SK-N-SH (cell line): ENCODE measurements at regions of chr16 and their contacts with region 1.

Region 1: GRCh38 chr16:48365581-48366164 is 19.5 kb downstream of the SIAH1 start:
- DNase-seq: peak; percentile 90
- H3K4me3 ChIP-seq: peak overlapping the region; percentile 63 to 86
- H3K27ac ChIP-seq: peak overlapping the region; percentile 82 to 91
- H3K4me1 ChIP-seq: peaks cover 14 to 27% of the 10 kb centered on the region in 2 experiments; a peak in 3 of 4 replicates
- H3K27me3 ChIP-seq: no peaks in the 10 kb centered on the region
- CTCF ChIP-seq: no peak
- EP300 ChIP-seq: no peak
- RAD21 ChIP-seq: no peak; the same call in 1 of the 2 replicates

Region 2: GRCh38 chr16:48353565-48354163 is 12.0 kb before region 1 on chr16:
- CTCF ChIA-PET with region 1: interaction called, 11 read pairs
- POLR2A ChIA-PET with region 1: interaction called, 3 read pairs
- DNase-seq: peak; percentile 76
- H3K4me3 ChIP-seq: peak overlapping the region in 1 of 2 experiments; percentile 39; a peak in 1 of 4 replicates
- H3K27ac ChIP-seq: peak overlapping the region in 1 of 2 experiments; percentile 19; a peak in 1 of 4 replicates
- H3K4me1 ChIP-seq: no peaks in the 10 kb centered on the region
- H3K27me3 ChIP-seq: no peaks in the 10 kb centered on the region
- CTCF ChIP-seq: peak; percentile 92
- EP300 ChIP-seq: no peak
- RAD21 ChIP-seq: peak; percentile 81

Region 3: DNA sequence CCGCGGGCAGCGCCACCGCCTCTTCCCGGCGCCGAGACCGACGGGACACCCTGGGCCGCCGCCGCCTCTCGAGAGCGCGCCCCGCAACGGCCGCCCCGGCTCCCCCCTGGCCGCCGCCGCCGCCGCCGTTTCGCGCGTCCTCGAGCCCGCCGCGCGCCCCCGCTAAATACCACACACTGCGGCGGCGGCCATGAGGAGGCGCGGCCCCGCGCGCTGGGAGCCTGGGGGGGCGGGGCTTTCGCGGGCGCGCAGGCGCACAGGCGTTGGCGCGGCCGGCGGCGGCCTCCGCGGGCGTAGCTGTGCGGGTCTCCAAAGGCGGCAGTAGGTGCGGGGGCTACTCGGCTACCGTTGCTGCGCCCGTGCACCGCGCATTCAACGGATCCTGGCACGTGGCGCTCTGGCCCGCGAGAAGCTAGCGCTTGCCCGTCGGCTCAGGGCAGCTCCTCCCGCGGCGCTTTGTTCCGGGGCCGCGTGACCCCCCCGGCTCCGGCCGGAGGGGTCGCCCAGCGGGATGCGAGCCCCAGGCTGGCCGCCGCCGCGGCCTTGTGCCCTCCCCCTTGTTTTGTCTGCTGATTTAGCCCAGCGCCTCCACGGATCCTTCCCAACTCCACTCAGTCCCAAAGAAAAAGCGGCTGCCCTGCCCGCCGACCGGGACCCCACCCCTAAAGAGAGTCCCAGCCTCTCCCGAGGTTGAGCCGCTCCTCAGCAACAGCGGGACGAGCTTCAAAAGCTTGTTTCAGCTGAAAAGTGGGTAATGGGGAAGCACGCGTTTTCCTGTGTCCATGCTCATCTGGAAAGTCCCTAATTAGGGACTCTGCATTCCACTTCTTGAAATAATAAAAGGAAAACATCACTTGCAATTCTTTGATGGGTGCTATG is 19.8 kb after region 1 on chr16 and contains the start of gene SIAH1:
- CTCF ChIA-PET with region 1: interaction called, 4 read pairs
- POLR2A ChIA-PET with region 1: interaction called, 21 read pairs
- DNase-seq: peak; percentile 98
- H3K4me3 ChIP-seq: peak within 1 kb of the TSS; percentile 81 to 85
- H3K27ac ChIP-seq: peak within 1 kb of the TSS; percentile 77 to 96
- H3K4me1 ChIP-seq: peaks cover 9 to 20% of the 10 kb centered on the region in 2 experiments; a peak in 3 of 4 replicates
- H3K27me3 ChIP-seq: no peaks in the 10 kb centered on the region
- CTCF ChIP-seq: no peak
- EP300 ChIP-seq: no peak
- RAD21 ChIP-seq: no peak
- polyA plus RNA-seq, gene SIAH1: 15.1 and 15.4 TPM in 2 replicates

Region 4: DNA sequence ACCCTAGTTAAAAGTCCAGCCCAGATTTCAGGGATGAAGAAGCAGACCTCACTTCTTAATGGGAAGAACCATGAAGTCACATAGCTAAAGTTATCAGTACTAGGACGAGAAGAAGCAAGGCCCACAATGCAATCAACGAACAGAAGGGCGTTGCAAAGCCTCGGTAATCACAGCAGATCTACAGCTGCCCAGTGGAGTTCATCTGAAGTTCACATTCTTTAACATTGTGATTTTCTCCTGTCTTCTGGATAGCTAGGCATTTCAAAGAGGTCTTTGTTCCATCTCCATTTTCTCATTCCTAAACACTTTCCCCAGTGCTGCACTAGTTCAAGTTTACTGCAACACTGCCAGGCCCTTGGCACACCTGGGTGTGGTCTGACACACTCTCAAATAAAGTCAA is 471.0 kb after region 1 on chr16:
- CTCF ChIA-PET with region 1: no interaction called
- POLR2A ChIA-PET with region 1: no interaction called
- DNase-seq: no peak
- H3K4me3 ChIP-seq: no peak overlapping the region
- H3K27ac ChIP-seq: no peak overlapping the region
- H3K4me1 ChIP-seq: no peaks in the 10 kb centered on the region
- H3K27me3 ChIP-seq: no peaks in the 10 kb centered on the region
- CTCF ChIP-seq: no peak
- EP300 ChIP-seq: no peak
- RAD21 ChIP-seq: no peak